Natural killer cell (primary cell): ENCODE measurements at regions of chr14 and their contacts with region 1.

Region 1: GRCh38 chr14:51780006-51780692 is 80.3 kb upstream of the GNG2 start:
- DNase-seq: peak; percentile 67 to 87
- ATAC-seq: peak; percentile 70 to 89 (median 88)
- H3K4me3 ChIP-seq: no peak overlapping the region
- H3K4me3 Mint-ChIP-seq: no peak overlapping the region
- H3K27ac ChIP-seq: no peak overlapping the region
- H3K27ac Mint-ChIP-seq: peak overlapping the region; percentile 36 to 80
- H3K4me1 ChIP-seq: peaks cover 4% of the 10 kb centered on the region
- H3K4me1 Mint-ChIP-seq: peaks cover 17 to 26% of the 10 kb centered on the region in 2 donors
- H3K27me3 ChIP-seq: peaks cover 3% of the 10 kb centered on the region
- H3K27me3 Mint-ChIP-seq: peaks cover 20 to 23% of the 10 kb centered on the region in 2 donors
- CTCF ChIP-seq: peak; percentile 88

Region 2: GRCh38 chr14:50954811-50955372 is 825.3 kb before region 1 on chr14:
- intact Hi-C with region 1: loop called (anchors 10 kb)
- DNase-seq: peak in 1 of 2 donors; percentile 38
- ATAC-seq: peak in 1 of 3 donors; percentile 42
- H3K4me3 ChIP-seq: no peak overlapping the region
- H3K4me3 Mint-ChIP-seq: no peak overlapping the region
- H3K27ac ChIP-seq: no peak overlapping the region
- H3K27ac Mint-ChIP-seq: no peak overlapping the region
- H3K4me1 ChIP-seq: no peaks in the 10 kb centered on the region
- H3K4me1 Mint-ChIP-seq: no peaks in the 10 kb centered on the region
- H3K27me3 ChIP-seq: no peaks in the 10 kb centered on the region
- H3K27me3 Mint-ChIP-seq: no peaks in the 10 kb centered on the region
- CTCF ChIP-seq: no peak

Region 3: GRCh38 chr14:51283402-51284085 is 496.6 kb before region 1 on chr14:
- intact Hi-C with region 1: loop called (anchors 1 kb)
- DNase-seq: peak in 1 of 2 donors; percentile 65
- ATAC-seq: peak; percentile 60 to 67 (median 62)
- H3K4me3 ChIP-seq: no peak overlapping the region
- H3K4me3 Mint-ChIP-seq: no peak overlapping the region
- H3K27ac ChIP-seq: no peak overlapping the region
- H3K27ac Mint-ChIP-seq: no peak overlapping the region
- H3K4me1 ChIP-seq: no peaks in the 10 kb centered on the region
- H3K4me1 Mint-ChIP-seq: no peaks in the 10 kb centered on the region
- H3K27me3 ChIP-seq: no peaks in the 10 kb centered on the region
- H3K27me3 Mint-ChIP-seq: no peaks in the 10 kb centered on the region
- CTCF ChIP-seq: peak; percentile 84

Region 4: GRCh38 chr14:51369814-51370213 is 410.3 kb before region 1 on chr14:
- intact Hi-C with region 1: loop called (anchors 1 kb)
- DNase-seq: peak in 1 of 2 donors; percentile 39
- ATAC-seq: peak in 1 of 3 donors; percentile 50
- H3K4me3 ChIP-seq: no peak overlapping the region
- H3K4me3 Mint-ChIP-seq: no peak overlapping the region
- H3K27ac ChIP-seq: no peak overlapping the region
- H3K27ac Mint-ChIP-seq: no peak overlapping the region
- H3K4me1 ChIP-seq: no peaks in the 10 kb centered on the region
- H3K4me1 Mint-ChIP-seq: no peaks in the 10 kb centered on the region
- H3K27me3 ChIP-seq: no peaks in the 10 kb centered on the region
- H3K27me3 Mint-ChIP-seq: peaks cover 7 to 13% of the 10 kb centered on the region in 2 donors
- CTCF ChIP-seq: peak; percentile 55

Region 5: GRCh38 chr14:51554953-51555352 is 225.2 kb before region 1 on chr14:
- intact Hi-C with region 1: loop called (anchors 1 kb)
- DNase-seq: peak in 1 of 2 donors; percentile 38
- ATAC-seq: peak; percentile 24 to 75 (median 50)
- H3K4me3 ChIP-seq: no peak overlapping the region
- H3K4me3 Mint-ChIP-seq: no peak overlapping the region
- H3K27ac ChIP-seq: no peak overlapping the region
- H3K27ac Mint-ChIP-seq: no peak overlapping the region
- H3K4me1 ChIP-seq: no peaks in the 10 kb centered on the region
- H3K4me1 Mint-ChIP-seq: no peaks in the 10 kb centered on the region
- H3K27me3 ChIP-seq: peaks cover 4% of the 10 kb centered on the region
- H3K27me3 Mint-ChIP-seq: peaks cover 16 to 31% of the 10 kb centered on the region in 2 donors
- CTCF ChIP-seq: peak; percentile 54

Region 6: GRCh38 chr14:51759950-51760349 is 20.2 kb before region 1 on chr14:
- intact Hi-C with region 1: no loop called
- DNase-seq: no peak
- ATAC-seq: no peak
- H3K4me3 ChIP-seq: no peak overlapping the region
- H3K4me3 Mint-ChIP-seq: no peak overlapping the region
- H3K27ac ChIP-seq: no peak overlapping the region
- H3K27ac Mint-ChIP-seq: no peak overlapping the region
- H3K4me1 ChIP-seq: no peaks in the 10 kb centered on the region
- H3K4me1 Mint-ChIP-seq: peaks cover 7 to 8% of the 10 kb centered on the region in 2 donors
- H3K27me3 ChIP-seq: no peaks in the 10 kb centered on the region
- H3K27me3 Mint-ChIP-seq: peaks cover 15 to 42% of the 10 kb centered on the region in 2 donors
- CTCF ChIP-seq: no peak